ENCODE measurements at regions of chr19 and their contacts with region 1.

Region 1: DNA sequence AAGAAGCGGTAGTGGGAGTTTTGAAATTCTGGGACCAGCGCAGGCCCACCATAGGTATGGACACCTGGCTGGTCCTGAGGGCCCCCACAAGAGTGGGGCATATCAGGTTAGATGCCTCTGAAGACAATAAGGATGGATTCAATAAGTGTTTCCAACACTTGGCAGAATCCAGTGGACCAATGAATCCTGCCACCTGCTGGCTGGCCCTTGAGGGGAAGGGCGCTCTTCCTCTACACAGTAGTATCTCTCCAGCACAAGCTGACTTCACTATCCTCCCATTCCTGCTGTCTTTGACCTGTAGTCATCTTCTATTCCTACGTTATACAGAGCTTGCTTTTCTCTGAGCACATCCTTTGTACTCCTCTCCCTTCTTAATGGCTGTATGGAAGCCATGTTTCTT is 199.7 kb upstream of the TSHZ3 start:
- DNase-seq: no peak
- ATAC-seq: no peak

Region 2: GRCh38 chr19:30696514-30696913 is 852.4 kb before region 1 on chr19:
- intact Hi-C with region 1: loop called in 1 of 2 experiments (anchors 10 kb)
- DNase-seq: no peak
- ATAC-seq: peak in 1 of 2 donors; percentile 65

Region 3: DNA sequence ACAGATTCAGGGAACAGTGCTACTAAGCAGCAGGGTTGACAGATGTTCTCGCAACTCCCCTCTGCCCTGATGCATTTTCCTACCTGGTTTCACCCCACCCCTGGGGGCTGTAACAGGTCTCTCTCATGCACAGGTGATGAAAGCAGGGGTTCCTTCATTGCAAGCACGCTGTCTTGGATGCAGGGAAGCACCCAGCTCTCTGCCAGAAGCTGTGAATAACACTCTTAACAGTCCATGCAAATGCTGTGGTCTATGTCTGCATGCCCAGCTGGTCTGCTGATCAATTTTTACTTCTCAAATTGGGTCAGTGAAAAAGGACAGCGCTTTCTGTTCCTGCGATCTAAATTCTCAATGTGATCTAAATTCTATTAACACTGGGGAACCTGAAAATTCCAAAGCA is 46.6 kb after region 1 on chr19:
- intact Hi-C with region 1: no loop called
- DNase-seq: no peak
- ATAC-seq: no peak

Measured in left cardiac atrium (tissue), 4 donors.